Activated T-helper 1 cell treated with anti-CD3 and anti-CD28 coated beads, Interleukin-12 subunit alpha, Interleukin-12 subunit beta, Interleukin-2, Interleukin-4 antibody, amounts not matched to agents 30 ng/mL and 10 ng/mL and 1 ng/mL, durations not matched to agents 14 hours and 24 hours and 36 hours (primary cell): ENCODE measurements at regions of chr3 and their contacts with region 1.

Region 1: GRCh38 chr3:109731620-109732473 is 394.5 kb upstream of the DPPA4 start:
- DNase-seq: peak; percentile 7
- H3K4me3 Mint-ChIP-seq: no peak overlapping the region
- H3K27ac Mint-ChIP-seq: no peak overlapping the region
- H3K4me1 Mint-ChIP-seq: no peaks in the 10 kb centered on the region
- H3K27me3 Mint-ChIP-seq: peaks cover 6% of the 10 kb centered on the region

Region 2: GRCh38 chr3:109963831-109964230 is 232.0 kb after region 1 on chr3:
- intact Hi-C with region 1: loop called (anchors 10 kb)
- DNase-seq: no peak
- H3K4me3 Mint-ChIP-seq: no peak overlapping the region
- H3K27ac Mint-ChIP-seq: no peak overlapping the region
- H3K4me1 Mint-ChIP-seq: no peaks in the 10 kb centered on the region
- H3K27me3 Mint-ChIP-seq: no peaks in the 10 kb centered on the region

Region 3: DNA sequence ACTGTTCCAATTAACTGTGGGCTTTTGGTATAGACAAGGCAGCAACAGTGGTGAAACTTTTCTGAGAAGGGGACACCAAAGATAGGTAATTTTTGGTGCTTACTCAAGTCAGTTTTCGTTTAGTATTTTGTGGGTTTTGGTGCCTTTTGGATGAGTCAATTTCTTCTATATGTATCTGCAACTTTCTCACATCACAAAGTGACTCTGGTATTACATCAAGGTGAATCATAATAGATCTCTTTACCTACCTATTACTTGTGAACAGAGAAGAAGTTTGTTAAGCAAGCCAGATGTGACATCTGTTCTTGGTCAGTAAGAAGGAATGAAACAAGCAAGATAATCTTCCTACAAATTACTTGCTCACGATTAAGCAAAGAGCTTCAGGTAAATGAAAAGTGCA is 337.9 kb after region 1 on chr3:
- intact Hi-C with region 1: loop called (anchors 10 kb)
- DNase-seq: no peak
- H3K4me3 Mint-ChIP-seq: no peak overlapping the region
- H3K27ac Mint-ChIP-seq: no peak overlapping the region
- H3K4me1 Mint-ChIP-seq: no peaks in the 10 kb centered on the region
- H3K27me3 Mint-ChIP-seq: peaks cover 1% of the 10 kb centered on the region

Region 4: GRCh38 chr3:110314512-110315114 is 582.8 kb after region 1 on chr3:
- intact Hi-C with region 1: loop called (anchors 1 kb)
- DNase-seq: peak; percentile 20
- H3K4me3 Mint-ChIP-seq: no peak overlapping the region
- H3K27ac Mint-ChIP-seq: no peak overlapping the region
- H3K4me1 Mint-ChIP-seq: no peaks in the 10 kb centered on the region
- H3K27me3 Mint-ChIP-seq: peaks cover 5% of the 10 kb centered on the region

Region 5: GRCh38 chr3:111080413-111080812 is 1348.6 kb after region 1 on chr3:
- intact Hi-C with region 1: loop called (anchors 2 kb)
- DNase-seq: no peak
- H3K4me3 Mint-ChIP-seq: no peak overlapping the region
- H3K27ac Mint-ChIP-seq: no peak overlapping the region
- H3K4me1 Mint-ChIP-seq: no peaks in the 10 kb centered on the region
- H3K27me3 Mint-ChIP-seq: peaks cover 13% of the 10 kb centered on the region